Dorsolateral prefrontal cortex (tissue), 120 donors: ENCODE measurements at regions of chr5 and their contacts with region 1.

Region 1: DNA sequence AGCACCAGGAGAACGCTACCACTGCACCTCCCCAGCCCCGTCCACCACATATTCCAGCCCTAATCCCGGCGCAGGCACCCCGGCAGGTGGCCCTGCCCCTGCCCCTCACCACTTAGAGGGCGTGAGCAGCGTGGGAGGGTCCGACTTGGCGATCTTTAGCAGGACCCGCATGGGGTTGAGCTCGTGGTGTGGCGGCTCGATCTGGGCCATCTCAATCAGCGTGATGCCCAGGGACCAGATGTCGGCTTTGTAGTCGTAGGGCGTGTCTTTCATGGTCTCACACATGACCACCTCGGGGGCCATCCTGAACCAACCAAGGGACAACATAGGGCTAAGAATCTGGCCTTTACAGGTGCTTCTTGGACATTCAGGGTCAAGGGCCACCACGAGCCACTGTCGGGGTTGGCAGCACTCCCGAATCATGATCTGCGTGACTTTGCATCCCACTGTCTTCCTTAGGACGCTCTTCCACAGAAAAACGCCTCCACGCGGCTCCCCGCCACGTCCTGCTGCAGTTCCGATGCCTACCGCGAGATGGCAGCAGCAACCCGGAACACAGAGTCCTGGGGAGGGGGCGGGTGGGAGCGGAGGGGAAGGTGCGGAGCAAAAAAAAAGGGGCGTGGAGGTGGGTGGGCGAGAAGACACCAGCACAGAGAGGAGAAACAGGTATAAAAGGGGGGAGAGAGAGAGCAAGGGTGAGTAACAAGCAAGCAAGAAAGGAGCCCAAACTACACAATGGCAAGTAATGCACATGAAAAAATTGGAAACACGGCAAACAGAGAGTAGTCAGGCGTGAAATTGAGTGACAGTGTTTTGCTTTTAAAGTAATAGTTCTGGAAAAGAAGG is 81.3 kb downstream of the STK10 start:
- DNase-seq: peak in 8 of 10 donors; percentile 67 to 78 (median 72)
- H3K4me3 ChIP-seq: peak overlapping the region in 54 of 59 donors; percentile 2 to 59 (median 37)
- H3K27ac ChIP-seq: peak overlapping the region in 1 of 59 donors; percentile 93
- H3K27me3 ChIP-seq: no peaks in the 10 kb centered on the region
- CTCF ChIP-seq: peak; percentile 61 to 96 (median 90)

Region 2: DNA sequence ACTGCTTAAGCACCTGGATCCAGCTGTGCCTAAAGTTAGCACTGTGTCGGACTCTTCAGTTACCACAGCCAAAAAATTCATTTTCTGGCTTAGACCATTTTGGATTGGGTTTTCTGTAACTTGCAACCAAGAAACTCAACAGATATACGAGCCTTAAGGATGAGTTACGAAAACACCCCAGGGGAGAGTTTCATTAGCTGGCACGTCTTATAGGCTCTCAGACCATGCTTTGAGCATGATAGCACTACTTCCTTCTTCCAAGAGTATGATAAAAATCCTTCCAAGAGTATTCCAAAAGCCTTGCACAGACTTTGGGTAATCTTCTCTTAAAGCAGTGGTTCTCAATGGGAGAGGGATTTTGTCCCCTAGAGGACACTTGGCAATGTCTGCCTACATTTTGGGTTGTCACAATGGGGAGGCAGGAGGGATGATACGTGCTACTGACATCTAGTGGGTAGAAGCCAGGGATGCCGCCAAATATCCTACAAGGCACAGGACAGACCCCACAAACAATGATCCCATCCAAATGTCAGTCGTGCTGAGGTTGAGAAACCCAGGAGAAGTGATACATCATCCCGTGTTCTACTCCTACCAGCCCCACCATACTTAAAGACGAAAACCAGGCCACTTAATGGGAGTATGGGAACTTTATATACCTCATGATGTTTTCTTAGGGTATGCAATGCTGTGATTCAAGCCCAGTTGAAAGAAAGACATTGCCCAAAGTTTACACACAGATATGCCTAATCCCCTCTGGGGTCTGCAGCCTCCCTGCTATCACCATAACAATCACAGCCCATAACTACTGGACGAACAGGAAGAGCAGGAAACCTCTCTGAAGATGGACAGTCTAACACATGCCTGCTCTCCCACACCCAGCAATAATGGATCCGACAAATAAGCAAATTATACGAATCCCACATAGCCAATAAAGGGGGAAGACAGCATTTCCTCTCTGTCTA is 256.1 kb before region 1 on chr5:
- intact Hi-C with region 1: no loop called
- DNase-seq: no peak
- H3K4me3 ChIP-seq: no peak overlapping the region
- H3K27ac ChIP-seq: no peak overlapping the region
- H3K27me3 ChIP-seq: no peaks in the 10 kb centered on the region
- CTCF ChIP-seq: peak in 13 of 56 donors; percentile 9 to 37 (median 17)

Region 3: DNA sequence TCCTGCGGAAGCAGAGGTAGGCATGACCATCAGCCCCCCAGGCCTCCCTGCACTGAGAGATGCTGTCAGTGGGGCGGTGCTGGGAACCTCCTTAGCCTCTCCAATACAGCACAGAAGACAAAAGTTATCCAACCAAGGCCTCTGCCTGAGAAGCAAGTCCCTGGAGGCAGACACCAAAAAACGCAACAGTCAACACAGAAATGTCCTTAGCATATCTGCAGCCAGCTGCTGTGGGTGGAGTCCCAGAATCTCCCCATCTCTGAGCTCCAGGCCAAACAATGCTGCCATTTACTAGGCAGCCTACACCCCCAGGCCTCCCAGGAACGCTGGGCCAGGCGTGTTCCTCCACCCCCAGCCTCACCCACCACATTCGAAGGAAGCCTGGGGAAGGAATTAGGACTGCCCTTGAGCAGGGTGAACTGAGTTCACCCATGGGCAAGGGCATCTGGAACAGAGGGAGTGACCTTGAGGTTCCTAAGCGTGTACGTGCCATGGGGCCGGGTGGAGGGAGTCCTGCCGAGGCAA is 37.6 kb after region 1 on chr5:
- intact Hi-C with region 1: loop called in 1 of 2 experiments (anchors 5 kb)
- DNase-seq: peak in 7 of 10 donors; percentile 33 to 71 (median 57)
- H3K4me3 ChIP-seq: peak overlapping the region in 17 of 59 donors; percentile 1 to 35 (median 18)
- H3K27ac ChIP-seq: peak overlapping the region in 48 of 59 donors; percentile 7 to 85 (median 60)
- H3K27me3 ChIP-seq: no peaks in the 10 kb centered on the region
- CTCF ChIP-seq: peak in 1 of 56 donors; percentile 4

Region 4: DNA sequence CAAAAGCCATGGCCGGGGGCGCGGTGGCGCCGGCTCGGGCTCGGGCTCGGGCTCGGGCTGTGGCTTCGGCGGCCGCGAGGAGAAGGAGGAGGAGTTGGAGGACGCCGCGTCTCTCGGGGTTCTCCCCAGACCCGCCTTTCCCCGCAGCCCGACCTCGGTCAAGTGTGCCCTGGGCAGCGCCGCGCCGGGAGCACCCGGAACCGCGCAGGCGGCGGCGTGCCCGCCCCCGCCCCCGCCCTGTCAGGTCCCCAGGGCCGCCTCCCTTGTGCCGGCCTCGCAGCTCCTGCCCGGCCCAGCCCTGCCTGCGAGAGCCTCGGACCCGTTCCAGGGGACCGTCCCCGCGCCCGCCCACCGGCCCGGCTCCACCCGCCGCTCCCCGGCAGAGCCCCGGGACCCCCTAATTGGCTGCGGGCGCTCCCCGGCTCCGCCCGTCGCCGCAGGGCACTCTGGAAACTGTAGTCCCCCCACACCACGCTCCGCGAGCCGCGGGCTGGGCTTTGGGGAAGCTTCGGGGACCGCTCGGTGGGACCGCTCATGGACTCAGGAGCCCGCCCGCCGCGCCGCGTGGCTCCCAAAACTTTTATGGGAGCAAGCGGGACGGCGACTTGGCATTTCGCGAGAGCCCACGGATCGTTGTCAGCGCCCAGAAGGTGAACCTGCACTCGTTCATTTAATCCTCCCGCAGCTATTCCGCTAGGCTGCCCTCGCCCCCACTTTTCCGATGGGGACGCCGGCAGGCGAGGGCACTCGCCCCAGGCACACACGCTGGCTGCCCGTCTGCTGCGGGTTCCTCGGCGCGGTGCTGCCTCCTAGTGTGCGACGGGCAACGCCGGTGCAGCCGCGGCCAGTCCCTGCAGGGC is 81.5 kb after region 1 on chr5 and contains the start of gene STK10:
- intact Hi-C with region 1: loop called (anchors 1 kb)
- DNase-seq: peak; percentile 78 to 94 (median 86)
- H3K4me3 ChIP-seq: peak within 1 kb of the TSS; percentile 68 to 98 (median 91)
- H3K27ac ChIP-seq: peak within 1 kb of the TSS; percentile 29 to 94 (median 85)
- H3K27me3 ChIP-seq: no peaks in the 10 kb centered on the region
- CTCF ChIP-seq: peak; percentile 44 to 97 (median 89)
- total RNA-seq, gene STK10: 4.5 to 28.7 (median 16.7) TPM

Region 5: DNA sequence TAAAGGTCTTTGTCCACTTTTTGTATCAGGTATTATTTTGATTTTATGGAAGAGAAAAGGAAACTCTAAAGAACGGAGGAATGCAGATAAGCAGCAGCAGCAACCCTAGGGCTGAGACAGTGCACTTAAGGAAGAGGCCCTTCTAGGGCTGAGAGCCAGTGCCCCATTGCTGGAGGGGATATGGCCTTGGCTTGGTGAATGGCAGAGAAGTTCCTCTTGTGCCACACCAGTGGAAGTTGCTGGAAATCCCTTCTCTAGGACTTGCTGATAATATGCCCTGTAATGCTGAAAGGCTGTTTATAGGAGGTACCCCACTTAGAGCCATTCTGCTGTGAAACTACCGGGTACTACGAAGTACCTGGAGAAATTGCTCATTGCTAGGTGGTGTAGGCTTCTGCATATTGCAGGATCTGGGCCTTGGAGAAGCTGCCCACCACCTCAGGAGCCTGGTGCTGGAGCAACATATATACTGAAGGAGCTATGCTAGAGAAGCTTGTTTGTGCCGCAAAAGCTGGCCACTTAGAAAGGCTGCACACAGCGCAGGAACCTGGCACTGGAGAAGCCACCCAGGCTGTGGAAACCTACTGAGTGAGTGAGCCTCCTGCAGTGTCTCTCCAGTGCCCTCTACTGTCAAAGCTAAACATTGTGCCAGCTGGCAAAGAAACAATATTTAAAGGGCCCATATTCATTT is 186.5 kb after region 1 on chr5:
- intact Hi-C with region 1: loop called (anchors 2 kb)
- DNase-seq: peak; percentile 37 to 85 (median 76)
- H3K4me3 ChIP-seq: peak overlapping the region in 4 of 59 donors; percentile 0 to 15 (median 8)
- H3K27ac ChIP-seq: peak overlapping the region in 31 of 59 donors; percentile 2 to 90 (median 61)
- H3K27me3 ChIP-seq: no peaks in the 10 kb centered on the region
- CTCF ChIP-seq: peak; percentile 60 to 90 (median 80)

Region 6: DNA sequence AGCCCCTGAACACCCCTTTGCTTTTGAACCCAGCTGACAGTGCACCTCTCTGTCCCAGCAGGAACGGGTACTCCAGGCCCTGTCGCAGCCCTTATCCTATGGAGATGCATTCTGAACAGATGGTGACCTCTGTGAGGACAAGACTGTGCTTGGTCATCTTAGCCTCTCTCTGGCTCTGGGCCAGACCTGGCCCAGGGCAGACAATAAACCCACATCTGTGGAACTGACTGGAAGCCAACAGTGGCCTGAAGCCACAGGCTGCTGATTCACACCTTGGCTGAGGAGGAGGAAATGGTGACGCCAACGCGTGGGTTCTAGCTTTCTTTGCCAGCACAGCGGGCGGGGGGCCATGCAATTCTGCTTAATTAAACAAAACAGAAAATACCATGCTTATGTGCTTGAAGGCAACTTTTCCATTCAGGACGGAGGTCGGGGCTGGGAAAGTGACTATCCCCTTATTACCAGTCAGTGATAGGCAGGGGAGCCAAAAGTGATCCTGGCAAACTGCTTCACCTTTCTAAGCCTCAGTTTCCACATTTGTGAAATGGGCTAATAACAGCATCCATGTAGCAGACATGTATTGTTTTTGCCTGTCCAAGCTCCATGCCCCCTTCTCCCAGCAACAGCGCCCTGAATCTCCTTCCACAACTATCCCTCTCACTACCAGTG is 336.8 kb after region 1 on chr5:
- intact Hi-C with region 1: loop called in 1 of 2 experiments (anchors 10 kb)
- DNase-seq: peak in 6 of 10 donors; percentile 66 to 81 (median 76)
- H3K4me3 ChIP-seq: no peak overlapping the region
- H3K27ac ChIP-seq: peak overlapping the region in 51 of 59 donors; percentile 2 to 97 (median 49)
- H3K27me3 ChIP-seq: no peaks in the 10 kb centered on the region
- CTCF ChIP-seq: no peak

Region 7: GRCh38 chr5:172594867-172595466 is 488.2 kb after region 1 on chr5:
- intact Hi-C with region 1: no loop called
- DNase-seq: peak in 1 of 10 donors; percentile 13
- H3K4me3 ChIP-seq: no peak overlapping the region
- H3K27ac ChIP-seq: no peak overlapping the region
- H3K27me3 ChIP-seq: no peaks in the 10 kb centered on the region
- CTCF ChIP-seq: no peak